Naive thymus-derived CD4-positive, alpha-beta T cell (primary cell): ENCODE measurements at regions of chr4 and their contacts with region 1.

Region 1: GRCh38 chr4:87489678-87490077 is 39.5 kb downstream of the SPARCL1 start:
- DNase-seq: no peak
- ATAC-seq: no peak
- H3K4me3 ChIP-seq: no peak overlapping the region
- H3K4me3 Mint-ChIP-seq: no peak overlapping the region
- H3K27ac ChIP-seq: no peak overlapping the region
- H3K27ac Mint-ChIP-seq: no peak overlapping the region
- H3K4me1 ChIP-seq: no peaks in the 10 kb centered on the region
- H3K4me1 Mint-ChIP-seq: peaks cover 0 to 5% (median 0%) of the 10 kb centered on the region in 7 donors
- H3K27me3 ChIP-seq: no peaks in the 10 kb centered on the region
- H3K27me3 Mint-ChIP-seq: peaks cover 0 to 17% (median 0%) of the 10 kb centered on the region in 5 donors

Region 2: DNA sequence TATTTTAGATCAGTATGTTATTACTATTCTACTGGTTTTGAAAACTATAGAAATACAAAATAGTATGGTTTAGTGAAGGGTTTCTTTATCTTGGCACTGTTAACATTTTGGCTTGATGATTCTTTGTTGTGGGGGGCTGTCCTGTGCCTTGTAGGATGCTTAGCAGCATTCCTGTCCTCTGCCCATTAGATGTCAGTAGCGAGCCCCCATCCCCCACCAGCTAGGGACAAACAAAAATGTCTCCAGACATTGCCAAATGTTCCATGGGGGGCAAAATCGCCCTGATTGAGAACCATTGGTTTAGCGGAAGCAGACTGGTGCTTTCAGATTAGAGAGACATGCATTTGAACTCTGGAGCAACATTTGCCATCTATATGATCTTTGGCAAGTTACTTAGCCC is 16.2 kb after region 1 on chr4:
- CTCF ChIA-PET with region 1: no interaction called
- POLR2A ChIA-PET with region 1: no interaction called
- intact Hi-C with region 1: no loop called
- DNase-seq: no peak
- ATAC-seq: no peak
- H3K4me3 ChIP-seq: no peak overlapping the region
- H3K4me3 Mint-ChIP-seq: no peak overlapping the region
- H3K27ac ChIP-seq: no peak overlapping the region
- H3K27ac Mint-ChIP-seq: no peak overlapping the region
- H3K4me1 ChIP-seq: no peaks in the 10 kb centered on the region
- H3K4me1 Mint-ChIP-seq: no peaks in the 10 kb centered on the region
- H3K27me3 ChIP-seq: no peaks in the 10 kb centered on the region
- H3K27me3 Mint-ChIP-seq: peaks cover 0 to 6% (median 0%) of the 10 kb centered on the region in 5 donors

Region 3: DNA sequence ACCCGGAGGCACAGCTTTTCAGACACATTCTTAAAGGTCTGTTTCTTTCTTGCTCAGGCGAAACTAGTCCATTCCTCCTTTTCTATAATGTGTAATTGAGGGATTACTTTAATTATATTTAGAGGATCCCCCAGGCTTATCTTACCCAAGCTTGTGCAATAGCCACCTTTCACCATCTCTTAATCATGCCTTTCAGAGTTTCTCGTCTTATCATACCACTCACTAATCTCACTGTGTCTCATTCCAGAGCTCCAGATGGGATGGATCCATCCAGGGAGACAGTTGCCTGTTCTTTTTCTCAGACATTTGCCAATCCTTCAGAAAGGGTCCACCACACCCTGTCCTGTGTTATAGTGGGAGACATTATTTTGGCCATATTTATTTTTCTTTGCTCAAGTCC is 27.0 kb after region 1 on chr4:
- CTCF ChIA-PET with region 1: no interaction called
- POLR2A ChIA-PET with region 1: no interaction called
- intact Hi-C with region 1: loop called in 1 of 2 experiments (anchors 1 kb)
- DNase-seq: no peak
- ATAC-seq: no peak
- H3K4me3 ChIP-seq: no peak overlapping the region
- H3K4me3 Mint-ChIP-seq: no peak overlapping the region
- H3K27ac ChIP-seq: no peak overlapping the region
- H3K27ac Mint-ChIP-seq: no peak overlapping the region
- H3K4me1 ChIP-seq: no peaks in the 10 kb centered on the region
- H3K4me1 Mint-ChIP-seq: no peaks in the 10 kb centered on the region
- H3K27me3 ChIP-seq: no peaks in the 10 kb centered on the region
- H3K27me3 Mint-ChIP-seq: peaks cover 0 to 15% (median 0%) of the 10 kb centered on the region in 5 donors